Heart left ventricle (tissue), 16 donors: ENCODE measurements at regions of chr2 and their contacts with region 1.

Region 1: DNA sequence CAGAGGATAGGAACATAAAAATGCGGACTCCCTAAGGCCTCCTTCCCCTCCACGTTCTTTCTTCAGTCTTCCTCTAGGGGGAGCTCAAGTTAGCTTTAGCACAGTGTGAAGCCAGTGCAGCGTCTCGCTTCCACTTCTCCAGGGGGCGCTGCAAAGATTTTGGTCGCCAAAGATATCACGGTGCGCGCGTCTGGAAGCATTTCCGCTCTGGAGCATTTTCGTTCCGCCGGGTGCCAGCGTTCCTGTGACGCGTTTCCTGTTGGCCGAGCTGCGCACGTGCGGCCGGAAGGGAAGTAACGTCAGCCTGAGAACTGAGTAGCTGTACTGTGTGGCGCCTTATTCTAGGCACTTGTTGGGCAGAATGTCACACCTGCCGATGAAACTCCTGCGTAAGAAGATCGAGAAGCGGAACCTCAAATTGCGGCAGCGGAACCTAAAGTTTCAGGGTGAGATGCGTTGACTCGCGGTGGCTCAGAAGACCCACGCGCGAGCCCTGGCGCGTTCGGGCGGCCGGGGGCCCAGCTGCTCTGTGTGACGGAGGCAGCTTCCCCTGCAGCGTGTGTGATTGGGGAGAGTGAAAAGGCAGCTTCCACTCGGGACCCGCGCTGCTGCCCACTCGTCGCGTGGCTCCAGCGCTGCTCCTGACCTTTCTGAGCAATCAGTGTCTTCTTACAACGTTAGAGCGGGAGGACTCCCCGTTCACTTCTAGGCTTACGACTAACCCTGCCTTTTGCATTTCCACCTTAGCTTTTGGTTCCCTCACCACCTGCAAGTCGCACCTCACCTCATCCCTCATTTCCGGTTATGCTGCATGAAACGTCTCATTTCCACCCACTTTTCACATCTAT is at the start of gene DDX18:
- DNase-seq: peak; percentile 97 to 98 (median 97)
- ATAC-seq: peak; percentile 96 to 100 (median 99)
- H3K4me3 ChIP-seq: peak within 1 kb of the TSS; percentile 63 to 95 (median 82)
- H3K27ac ChIP-seq: peak within 1 kb of the TSS; percentile 54 to 92 (median 88)
- H3K4me1 ChIP-seq: peaks cover 0 to 27% (median 15%) of the 10 kb centered on the region in 12 donors
- H3K27me3 ChIP-seq: no peaks in the 10 kb centered on the region
- CTCF ChIP-seq: peak; percentile 97 to 100 (median 99)
- POLR2A ChIP-seq: peak in 1 of 2 donors; percentile 45
- total RNA-seq, gene DDX18: 16.0 to 40.6 (median 28.2) TPM

Region 2: GRCh38 chr2:117470311-117471095 is 344.1 kb before region 1 on chr2:
- intact Hi-C with region 1: no loop called
- DNase-seq: peak in 1 of 5 donors; percentile 20
- ATAC-seq: peak in 1 of 4 donors; percentile 24
- H3K4me3 ChIP-seq: no peak overlapping the region
- H3K27ac ChIP-seq: no peak overlapping the region
- H3K4me1 ChIP-seq: no peaks in the 10 kb centered on the region
- H3K27me3 ChIP-seq: no peaks in the 10 kb centered on the region
- CTCF ChIP-seq: peak; percentile 24 to 63 (median 44)
- POLR2A ChIP-seq: no peak

Region 3: DNA sequence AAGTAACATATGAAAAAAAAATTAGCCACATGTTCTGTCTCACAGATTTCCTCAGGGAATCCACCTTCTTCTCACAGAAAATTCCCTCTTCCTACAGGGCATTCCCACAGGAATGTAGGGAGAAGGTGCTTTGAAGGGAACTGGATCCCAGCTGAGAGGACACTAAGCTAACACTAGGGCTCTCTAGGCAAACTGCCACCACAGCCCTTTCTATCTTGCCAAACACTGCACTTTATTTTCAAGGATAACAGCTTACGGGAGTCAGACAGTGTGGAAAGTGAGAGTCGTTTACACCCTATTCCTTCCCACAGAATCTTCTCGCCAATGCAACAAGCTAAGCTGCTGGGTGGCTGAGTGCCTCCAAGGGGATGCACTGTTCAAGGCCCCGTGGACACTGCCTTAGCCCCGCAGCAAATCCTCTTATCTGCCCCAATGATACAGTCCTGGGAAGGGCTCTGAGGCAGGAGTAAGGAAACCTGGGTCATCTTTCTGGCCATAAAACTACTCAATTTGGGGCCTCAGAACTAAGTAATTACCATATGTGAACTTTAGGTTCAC is 122.3 kb after region 1 on chr2:
- intact Hi-C with region 1: loop called in 1 of 10 experiments (anchors 10 kb)
- DNase-seq: peak in 1 of 5 donors; percentile 43
- ATAC-seq: peak; percentile 78 to 86 (median 82)
- H3K4me3 ChIP-seq: no peak overlapping the region
- H3K27ac ChIP-seq: peak overlapping the region in 6 of 12 donors; percentile 6 to 50 (median 36)
- H3K4me1 ChIP-seq: peaks cover 0 to 34% (median 8%) of the 10 kb centered on the region in 12 donors
- H3K27me3 ChIP-seq: no peaks in the 10 kb centered on the region
- CTCF ChIP-seq: no peak
- POLR2A ChIP-seq: no peak

Region 4: GRCh38 chr2:118003396-118003824 is 188.8 kb after region 1 on chr2:
- intact Hi-C with region 1: loop called in 4 of 10 experiments (anchors 5 kb)
- DNase-seq: peak in 2 of 5 donors; percentile 39 to 45
- ATAC-seq: peak in 3 of 4 donors; percentile 75 to 93 (median 86)
- H3K4me3 ChIP-seq: no peak overlapping the region
- H3K27ac ChIP-seq: no peak overlapping the region
- H3K4me1 ChIP-seq: peaks cover 0 to 51% (median 8%) of the 10 kb centered on the region in 12 donors
- H3K27me3 ChIP-seq: no peaks in the 10 kb centered on the region
- CTCF ChIP-seq: peak; percentile 72 to 90 (median 83)
- POLR2A ChIP-seq: no peak

Region 5: DNA sequence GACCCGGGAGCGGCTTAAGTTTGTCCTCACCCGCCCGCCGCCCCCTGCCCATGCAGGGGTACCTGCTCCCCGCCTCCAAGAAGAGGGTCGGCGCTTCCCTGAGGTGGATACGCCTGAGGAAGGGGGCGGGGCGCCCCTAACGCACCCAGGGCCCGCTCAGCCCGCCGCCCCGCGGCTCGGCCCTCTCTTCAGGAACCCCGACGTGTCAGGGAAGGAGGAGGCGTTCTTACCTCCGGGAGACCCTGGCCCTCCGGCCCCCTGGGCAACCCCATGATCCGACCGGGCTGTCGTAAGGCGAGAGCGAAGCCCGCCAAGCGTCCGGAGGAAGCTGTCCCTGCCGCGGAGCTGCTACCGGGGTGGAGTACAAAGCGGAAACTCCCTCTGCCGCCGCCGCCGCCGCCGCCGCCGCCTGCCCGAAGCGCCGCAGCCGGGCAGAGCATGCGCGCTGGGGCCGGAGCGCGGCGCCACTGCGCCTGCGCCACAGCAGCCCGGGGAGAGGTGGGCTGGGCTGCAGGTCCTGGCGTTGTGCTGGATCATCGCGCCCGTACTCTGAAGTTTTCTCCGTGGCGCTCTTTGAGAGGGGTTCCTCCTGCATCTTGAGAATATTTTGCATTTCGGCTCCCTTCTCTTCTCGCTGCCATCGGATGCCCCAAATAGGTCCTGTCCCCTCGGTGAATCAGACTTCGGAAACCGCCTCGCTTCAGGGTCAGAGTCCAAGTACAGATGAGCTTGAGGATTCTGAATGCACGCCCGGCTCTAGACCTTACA is 199.3 kb after region 1 on chr2 and contains the start of gene CCDC93:
- intact Hi-C with region 1: loop called in 3 of 10 experiments (anchors 5 to 10 kb)
- DNase-seq: peak; percentile 86 to 93 (median 88)
- ATAC-seq: peak; percentile 81 to 97 (median 94)
- H3K4me3 ChIP-seq: peak within 1 kb of the TSS; percentile 79 to 100 (median 90)
- H3K27ac ChIP-seq: peak within 1 kb of the TSS; percentile 82 to 98 (median 95)
- H3K4me1 ChIP-seq: peaks cover 4 to 51% (median 28%) of the 10 kb centered on the region in 12 donors
- H3K27me3 ChIP-seq: no peaks in the 10 kb centered on the region
- CTCF ChIP-seq: peak in 1 of 12 donors; percentile 18
- POLR2A ChIP-seq: peak; percentile 5 to 77
- total RNA-seq, gene CCDC93: 15.6 to 47.6 (median 32.3) TPM

Region 6: DNA sequence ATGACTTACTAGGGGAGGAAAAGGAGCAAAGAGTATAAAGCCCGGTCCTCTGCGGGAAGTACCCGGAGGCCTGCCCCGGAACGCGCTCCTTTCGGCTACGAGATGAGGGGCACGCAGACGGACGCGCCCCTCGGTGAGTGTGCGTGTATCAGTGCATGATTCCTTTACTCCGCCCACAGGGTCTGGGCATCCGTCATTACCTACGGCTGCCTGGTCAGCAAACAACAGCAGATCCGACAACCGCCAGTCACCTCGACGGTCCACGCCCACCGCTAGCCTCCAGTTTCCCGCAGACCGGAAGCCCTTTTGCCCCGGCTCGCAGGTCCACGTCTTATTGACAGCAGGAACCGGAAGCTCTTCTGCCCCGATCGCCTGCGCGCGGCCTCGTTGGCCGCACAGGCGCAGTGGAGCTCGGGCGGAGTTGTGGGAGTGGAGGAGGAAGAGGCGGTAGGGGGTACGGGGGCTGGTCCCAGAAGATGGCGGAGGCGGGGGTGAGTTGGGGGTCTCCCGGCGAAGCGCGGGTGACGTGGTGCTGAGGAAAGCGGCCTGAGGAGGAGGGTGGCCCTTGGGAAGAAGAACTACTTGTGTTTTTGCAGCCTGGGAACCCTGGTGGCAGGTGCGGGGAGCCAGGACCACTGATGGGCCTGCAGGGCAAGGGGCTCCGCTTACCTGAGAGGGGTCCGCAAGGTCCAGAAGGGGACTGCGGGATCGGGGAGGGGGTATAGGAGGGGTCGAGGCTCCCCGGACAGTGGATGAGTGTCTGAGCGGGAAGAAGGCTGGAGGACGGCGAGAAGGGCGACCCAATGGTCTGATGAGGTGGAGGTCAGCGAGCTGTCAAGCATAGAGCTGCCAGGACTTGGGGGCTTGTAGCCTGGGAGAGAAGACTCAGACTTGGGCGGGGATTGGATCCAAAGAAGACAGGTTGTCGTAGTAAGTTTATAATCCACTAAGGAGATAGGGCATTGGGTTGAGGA is 273.7 kb after region 1 on chr2 and contains the start of gene INSIG2:
- intact Hi-C with region 1: loop called in 1 of 10 experiments (anchors 10 kb)
- DNase-seq: peak; percentile 92 to 96 (median 95)
- ATAC-seq: peak; percentile 96 to 99 (median 99)
- H3K4me3 ChIP-seq: peak within 1 kb of the TSS; percentile 68 to 92 (median 83)
- H3K27ac ChIP-seq: peak within 1 kb of the TSS in 11 of 12 donors; percentile 23 to 81 (median 57)
- H3K4me1 ChIP-seq: peaks cover 0 to 31% (median 13%) of the 10 kb centered on the region in 12 donors
- H3K27me3 ChIP-seq: no peaks in the 10 kb centered on the region
- CTCF ChIP-seq: peak in 1 of 12 donors; percentile 20
- POLR2A ChIP-seq: peak in 1 of 2 donors; percentile 60
- total RNA-seq, gene INSIG2: 9.1 to 16.4 (median 13.7) TPM